HepG2 (cell line): ENCODE measurements at regions of chr7 and their contacts with region 1.

Region 1: DNA sequence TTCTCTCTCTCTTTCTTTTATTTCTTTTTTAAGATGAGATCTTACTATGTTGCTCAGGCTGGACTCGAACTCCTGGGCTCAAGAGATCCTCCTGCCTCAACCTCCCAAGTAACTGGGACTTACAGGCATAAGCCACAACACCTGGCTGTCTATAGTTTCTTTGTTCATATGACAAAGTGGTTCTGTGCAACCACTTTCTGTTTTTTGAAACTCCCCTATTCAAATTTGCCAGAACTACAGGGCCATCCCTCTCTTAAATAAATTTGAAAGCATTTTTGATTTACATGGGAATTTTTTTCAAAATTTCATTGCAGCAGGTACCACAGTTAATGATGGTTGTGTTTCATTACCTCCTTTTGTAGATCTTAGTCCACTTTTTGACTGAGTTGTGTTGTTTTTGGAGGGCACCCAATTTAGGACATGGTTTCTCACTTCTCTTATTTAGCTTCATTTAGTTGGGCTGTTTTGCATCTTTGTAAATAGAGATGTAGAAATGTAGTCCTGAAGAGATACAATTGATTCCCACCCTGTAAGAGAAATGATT is 119.2 kb downstream of the LRRC4 start:
- DNase-seq: no peak
- ATAC-seq: no peak
- H3K4me3 ChIP-seq: no peak overlapping the region
- H3K27ac ChIP-seq: peak overlapping the region; percentile 25
- H3K4me1 ChIP-seq: peaks cover 61% of the 10 kb centered on the region
- H3K27me3 ChIP-seq: no peaks in the 10 kb centered on the region
- CTCF ChIP-seq: no peak
- EP300 ChIP-seq: no peak
- POLR2A ChIP-seq: no peak
- RAD21 ChIP-seq: no peak

Region 2: GRCh38 chr7:127819975-127820731 is 91.9 kb before region 1 on chr7:
- CTCF ChIA-PET with region 1: no interaction called
- POLR2A ChIA-PET with region 1: no interaction called
- in situ Hi-C with region 1: no loop called
- intact Hi-C with region 1: loop called (anchors 5 kb)
- DNase-seq: peak; percentile 84
- ATAC-seq: peak; percentile 75
- H3K4me3 ChIP-seq: no peak overlapping the region
- H3K27ac ChIP-seq: peak overlapping the region; percentile 45
- H3K4me1 ChIP-seq: peaks cover 90% of the 10 kb centered on the region
- H3K27me3 ChIP-seq: no peaks in the 10 kb centered on the region
- CTCF ChIP-seq: no peak
- EP300 ChIP-seq: peak in 1 of 2 experiments; percentile 20; a peak in 1 of 4 replicates
- POLR2A ChIP-seq: no peak
- RAD21 ChIP-seq: no peak

Region 3: DNA sequence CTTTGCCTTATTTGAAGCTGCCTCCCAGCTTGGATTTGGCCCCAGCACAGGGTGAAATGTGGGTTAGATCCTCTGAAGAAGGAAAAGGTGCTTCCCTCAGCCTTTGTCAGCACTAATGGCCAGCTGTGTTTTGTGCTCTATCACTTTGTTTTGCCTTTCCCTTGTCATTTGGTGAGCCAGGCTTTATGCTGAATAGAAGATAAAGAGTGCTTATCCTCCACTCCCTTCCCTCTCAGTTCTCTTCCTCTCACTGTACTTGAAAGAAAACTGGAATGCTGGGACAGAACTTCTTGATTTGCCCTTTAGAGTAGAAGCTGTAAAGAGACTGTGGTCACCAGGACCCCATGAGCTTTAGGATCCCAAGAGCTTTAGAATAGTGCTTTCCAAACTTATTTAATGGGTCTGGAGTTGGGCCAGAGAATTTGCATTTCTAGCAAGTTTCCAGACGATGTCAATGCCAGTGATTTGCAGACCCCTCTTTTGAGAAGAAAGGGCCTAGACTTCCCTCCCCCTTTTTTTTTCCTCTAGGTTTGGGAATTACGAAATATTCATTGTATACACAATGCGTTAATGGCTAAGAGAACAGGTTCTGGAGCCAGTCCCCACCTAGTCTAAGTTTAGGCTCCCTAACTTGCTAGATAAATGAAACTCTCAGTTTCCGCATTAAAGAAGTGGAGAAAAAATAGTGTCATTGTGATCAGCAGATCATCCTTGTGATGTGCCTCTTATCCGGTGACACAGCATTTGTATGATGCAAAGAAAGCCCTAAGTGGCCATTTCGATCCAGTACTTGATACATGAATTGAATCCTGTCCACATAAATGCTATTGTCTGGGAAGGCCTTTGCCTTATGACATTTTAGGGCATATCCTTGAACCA is 37.9 kb after region 1 on chr7:
- CTCF ChIA-PET with region 1: no interaction called
- POLR2A ChIA-PET with region 1: no interaction called
- in situ Hi-C with region 1: no loop called
- intact Hi-C with region 1: no loop called
- DNase-seq: no peak
- ATAC-seq: no peak
- H3K4me3 ChIP-seq: no peak overlapping the region
- H3K27ac ChIP-seq: no peak overlapping the region
- H3K4me1 ChIP-seq: no peaks in the 10 kb centered on the region
- H3K27me3 ChIP-seq: no peaks in the 10 kb centered on the region
- CTCF ChIP-seq: no peak
- EP300 ChIP-seq: no peak
- POLR2A ChIP-seq: no peak
- RAD21 ChIP-seq: no peak